IMR-90 (cell line): ENCODE measurements at regions of chr10 and their contacts with region 1.

Region 1: GRCh38 chr10:60964257-60965235 is 20.6 kb upstream of the RHOBTB1 start:
- DNase-seq: peak; percentile 91
- ATAC-seq: peak; percentile 76
- H3K4me3 ChIP-seq: no peak overlapping the region
- H3K27ac ChIP-seq: peak overlapping the region; percentile 49; the same call in 1 of the 2 replicates
- H3K4me1 ChIP-seq: peaks cover 4% of the 10 kb centered on the region; the same call in 1 of the 2 replicates
- H3K27me3 ChIP-seq: no peaks in the 10 kb centered on the region
- CTCF ChIP-seq: peak; percentile 88
- POLR2A ChIP-seq: no peak
- RAD21 ChIP-seq: peak; percentile 78

Region 2: DNA sequence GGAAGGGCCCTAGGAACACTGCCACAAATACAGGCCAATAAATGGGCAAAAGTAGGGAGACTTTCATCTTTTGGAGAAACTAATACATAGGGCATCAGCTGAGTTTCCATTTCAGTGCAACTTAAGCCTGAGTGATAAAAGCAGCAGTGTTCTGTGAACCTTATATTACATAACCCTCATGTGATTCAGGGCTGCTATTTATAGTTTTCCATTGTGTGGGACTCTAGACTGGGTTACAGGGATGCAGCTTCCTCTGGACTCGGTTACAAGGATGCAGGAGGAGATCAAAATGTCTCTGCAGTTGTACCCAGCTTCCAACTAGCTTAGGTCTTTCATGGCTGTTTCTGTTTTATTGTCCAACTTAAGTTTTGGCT is 153.8 kb before region 1 on chr10:
- CTCF ChIA-PET with region 1: interaction called, 3 read pairs
- POLR2A ChIA-PET with region 1: no interaction called
- dilution Hi-C with region 1: no loop called
- in situ Hi-C with region 1: loop called (anchors 5 kb)
- intact Hi-C with region 1: no loop called
- DNase-seq: peak; percentile 60
- ATAC-seq: 0 out of 2 replicates have a peak, but pooled peaks have one; percentile 18
- H3K4me3 ChIP-seq: no peak overlapping the region
- H3K27ac ChIP-seq: no peak overlapping the region
- H3K4me1 ChIP-seq: peaks cover 4% of the 10 kb centered on the region
- H3K27me3 ChIP-seq: no peaks in the 10 kb centered on the region
- CTCF ChIP-seq: no peak
- POLR2A ChIP-seq: no peak
- RAD21 ChIP-seq: no peak

Region 3: GRCh38 chr10:60914690-60915141 is 49.8 kb before region 1 on chr10:
- CTCF ChIA-PET with region 1: no interaction called
- POLR2A ChIA-PET with region 1: no interaction called
- dilution Hi-C with region 1: no loop called
- in situ Hi-C with region 1: no loop called
- intact Hi-C with region 1: loop called (anchors 1 kb)
- DNase-seq: peak; percentile 93
- ATAC-seq: peak; percentile 89
- H3K4me3 ChIP-seq: no peak overlapping the region
- H3K27ac ChIP-seq: peak overlapping the region; percentile 53; the same call in 1 of the 2 replicates
- H3K4me1 ChIP-seq: peaks cover 23% of the 10 kb centered on the region
- H3K27me3 ChIP-seq: no peaks in the 10 kb centered on the region
- CTCF ChIP-seq: no peak
- POLR2A ChIP-seq: no peak
- RAD21 ChIP-seq: no peak

Region 4: DNA sequence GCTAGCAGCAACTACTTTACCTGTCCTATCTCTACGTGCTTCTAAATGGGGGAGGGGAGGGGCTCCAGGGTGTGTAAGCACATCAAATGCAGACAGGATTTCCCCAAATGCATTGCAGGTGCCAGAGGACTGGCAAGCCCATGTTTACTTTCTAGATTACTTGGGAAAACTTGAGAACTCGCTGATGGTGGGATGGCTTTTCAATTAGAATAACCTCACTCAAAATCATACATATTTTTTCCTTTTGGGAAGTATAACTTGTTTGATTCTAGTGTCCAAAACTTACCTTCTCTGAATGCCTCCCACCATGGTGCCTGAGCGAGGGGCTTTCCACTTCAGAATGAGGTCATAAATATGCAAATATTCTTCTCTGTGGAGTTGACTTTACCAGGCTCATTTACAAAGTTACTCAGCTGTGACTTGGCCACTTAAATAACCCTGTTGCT is 170.8 kb after region 1 on chr10:
- CTCF ChIA-PET with region 1: no interaction called
- POLR2A ChIA-PET with region 1: no interaction called
- dilution Hi-C with region 1: no loop called
- in situ Hi-C with region 1: no loop called
- intact Hi-C with region 1: loop called (anchors 5 kb)
- DNase-seq: no peak
- ATAC-seq: no peak
- H3K4me3 ChIP-seq: no peak overlapping the region
- H3K27ac ChIP-seq: no peak overlapping the region
- H3K4me1 ChIP-seq: peaks cover 15% of the 10 kb centered on the region
- H3K27me3 ChIP-seq: no peaks in the 10 kb centered on the region
- CTCF ChIP-seq: no peak
- POLR2A ChIP-seq: no peak
- RAD21 ChIP-seq: no peak

Region 5: GRCh38 chr10:61733358-61733940 is 768.9 kb after region 1 on chr10:
- CTCF ChIA-PET with region 1: no interaction called
- POLR2A ChIA-PET with region 1: no interaction called
- dilution Hi-C with region 1: no loop called
- in situ Hi-C with region 1: no loop called
- intact Hi-C with region 1: loop called (anchors 5 kb)
- DNase-seq: peak; percentile 64
- ATAC-seq: peak; percentile 54; the same call in 1 of the 2 replicates
- H3K4me3 ChIP-seq: no peak overlapping the region
- H3K27ac ChIP-seq: no peak overlapping the region
- H3K4me1 ChIP-seq: no peaks in the 10 kb centered on the region
- H3K27me3 ChIP-seq: no peaks in the 10 kb centered on the region
- CTCF ChIP-seq: peak; percentile 72
- POLR2A ChIP-seq: 0 out of 2 replicates have a peak, but pooled peaks have one; percentile 22
- RAD21 ChIP-seq: peak; percentile 79